ENCODE measurements at regions of chr22 and their contacts with region 1.

Region 1: DNA sequence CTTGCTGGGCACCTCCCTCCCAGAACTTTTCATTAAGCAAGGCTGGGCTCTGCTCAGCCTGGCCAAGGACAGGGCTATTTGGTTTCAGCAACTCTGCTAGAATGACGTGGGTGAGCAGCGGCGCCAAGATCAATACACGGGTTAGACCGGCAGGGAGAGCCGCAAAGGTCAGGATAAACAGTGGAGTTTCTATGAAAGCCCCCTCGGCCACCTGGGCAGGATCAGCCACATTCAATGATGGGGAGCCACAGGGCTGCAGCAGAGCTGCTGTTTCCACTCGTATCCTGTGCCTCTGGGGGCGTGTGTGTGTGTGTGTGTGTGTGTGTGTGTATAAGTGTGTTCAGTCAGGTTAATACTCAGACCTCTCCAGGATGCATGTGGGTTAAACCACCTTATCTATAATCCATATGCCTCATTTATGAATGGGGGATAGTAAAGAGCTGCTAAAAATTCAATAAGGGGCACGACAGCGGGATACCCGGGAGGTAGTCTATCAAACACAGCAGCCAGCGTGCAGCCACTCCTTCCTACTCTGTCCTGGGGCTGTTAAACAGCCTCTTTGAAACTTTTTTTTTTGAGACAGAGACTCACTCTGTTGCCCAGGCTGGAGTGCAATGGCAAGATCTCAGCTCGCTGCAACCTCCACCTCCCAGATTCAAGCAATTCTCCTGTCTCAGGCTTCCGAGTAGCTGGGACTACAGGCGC is 34.8 kb downstream of the MYH9 start:
- DNase-seq: peak in 5 of 9 experiments; percentile 51 to 81 (median 67)
- ATAC-seq: peak; percentile 32
- H3K4me3 ChIP-seq: peak overlapping the region in 1 of 2 experiments; percentile 36
- H3K4me3 Mint-ChIP-seq: peak overlapping the region; percentile 69
- H3K27ac ChIP-seq: peak overlapping the region; percentile 38 to 74
- H3K27ac Mint-ChIP-seq: peak overlapping the region; percentile 95
- H3K4me1 ChIP-seq: peaks cover 95% of the 10 kb centered on the region
- H3K4me1 Mint-ChIP-seq: peaks cover 95% of the 10 kb centered on the region
- H3K27me3 ChIP-seq: no peaks in the 10 kb centered on the region
- H3K27me3 Mint-ChIP-seq: no peaks in the 10 kb centered on the region
- CTCF ChIP-seq: no peak

Region 2: GRCh38 chr22:36339171-36340065 is 13.5 kb before region 1 on chr22:
- CTCF ChIA-PET with region 1: interaction called, 6 read pairs
- POLR2A ChIA-PET with region 1: interaction called, 21 read pairs
- intact Hi-C with region 1: loop called in 1 of 2 experiments (anchors 1 kb)
- DNase-seq: peak in 2 of 9 experiments; percentile 44 to 50
- ATAC-seq: peak; percentile 12
- H3K4me3 ChIP-seq: no peak overlapping the region
- H3K4me3 Mint-ChIP-seq: peak overlapping the region; percentile 64
- H3K27ac ChIP-seq: peak overlapping the region in 1 of 2 experiments; percentile 55
- H3K27ac Mint-ChIP-seq: peak overlapping the region; percentile 92
- H3K4me1 ChIP-seq: peaks cover 98% of the 10 kb centered on the region
- H3K4me1 Mint-ChIP-seq: peaks cover 92% of the 10 kb centered on the region
- H3K27me3 ChIP-seq: no peaks in the 10 kb centered on the region
- H3K27me3 Mint-ChIP-seq: no peaks in the 10 kb centered on the region
- CTCF ChIP-seq: no peak